Dorsolateral prefrontal cortex (tissue), 120 donors: ENCODE measurements at regions of chr22 and their contacts with region 1.

Region 1: GRCh38 chr22:37623075-37624016 is 14.7 kb downstream of the GGA1 start:
- DNase-seq: peak in 8 of 10 donors; percentile 40 to 77 (median 60)
- H3K4me3 ChIP-seq: no peak overlapping the region
- H3K27ac ChIP-seq: peak overlapping the region in 19 of 59 donors; percentile 2 to 65 (median 35)
- H3K27me3 ChIP-seq: no peaks in the 10 kb centered on the region
- CTCF ChIP-seq: peak; percentile 59 to 92 (median 82)

Region 2: DNA sequence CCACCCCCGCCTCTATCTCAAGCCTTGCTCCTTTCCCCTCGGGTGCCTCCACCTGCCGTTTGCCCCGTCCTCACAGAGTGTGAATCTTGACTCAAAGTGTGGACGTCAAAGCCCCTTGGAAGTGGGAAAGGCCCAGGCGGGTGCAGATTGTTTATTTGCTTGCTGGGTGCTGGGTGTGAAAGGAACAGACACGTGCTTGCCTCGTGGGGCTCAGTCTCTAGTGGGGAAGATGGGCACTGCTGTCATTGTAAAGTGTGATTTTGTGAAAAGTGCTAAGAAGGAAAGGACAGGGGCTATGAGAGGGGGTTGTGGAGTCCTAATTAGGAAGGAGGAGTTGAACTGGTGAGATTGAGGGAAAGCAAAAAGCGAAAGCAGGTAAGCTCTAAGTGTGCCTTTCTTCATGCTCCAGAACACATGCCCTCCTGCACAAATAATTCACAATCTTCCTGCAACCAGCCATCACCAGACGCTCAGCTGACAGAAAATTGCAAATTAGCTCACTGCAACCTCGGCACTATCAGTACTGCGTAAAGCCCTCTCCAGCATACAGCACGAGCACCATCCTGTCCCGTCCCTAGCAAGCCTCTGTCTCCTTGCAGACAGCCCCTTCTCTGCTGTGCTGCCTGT is 174.6 kb after region 1 on chr22:
- intact Hi-C with region 1: loop called in 1 of 2 experiments (anchors 10 kb)
- DNase-seq: no peak
- H3K4me3 ChIP-seq: no peak overlapping the region
- H3K27ac ChIP-seq: no peak overlapping the region
- H3K27me3 ChIP-seq: no peaks in the 10 kb centered on the region
- CTCF ChIP-seq: no peak